ENCODE measurements at regions of chr6 and their contacts with region 1.

Region 1: GRCh38 chr6:94736236-94736635 is 841.1 kb upstream of the MANEA start:
- DNase-seq: no peak

Region 2: GRCh38 chr6:94902974-94903600 is 166.9 kb after region 1 on chr6:
- intact Hi-C with region 1: loop called in 1 of 2 experiments (anchors 5 kb)
- DNase-seq: no peak

Region 3: GRCh38 chr6:96051555-96051954 is 1315.3 kb after region 1 on chr6:
- intact Hi-C with region 1: no loop called
- DNase-seq: no peak

Measured in posterior vena cava (tissue), 2 donors.